IMR-90 (cell line): ENCODE measurements at regions of chr1 and their contacts with region 1.

Region 1: DNA sequence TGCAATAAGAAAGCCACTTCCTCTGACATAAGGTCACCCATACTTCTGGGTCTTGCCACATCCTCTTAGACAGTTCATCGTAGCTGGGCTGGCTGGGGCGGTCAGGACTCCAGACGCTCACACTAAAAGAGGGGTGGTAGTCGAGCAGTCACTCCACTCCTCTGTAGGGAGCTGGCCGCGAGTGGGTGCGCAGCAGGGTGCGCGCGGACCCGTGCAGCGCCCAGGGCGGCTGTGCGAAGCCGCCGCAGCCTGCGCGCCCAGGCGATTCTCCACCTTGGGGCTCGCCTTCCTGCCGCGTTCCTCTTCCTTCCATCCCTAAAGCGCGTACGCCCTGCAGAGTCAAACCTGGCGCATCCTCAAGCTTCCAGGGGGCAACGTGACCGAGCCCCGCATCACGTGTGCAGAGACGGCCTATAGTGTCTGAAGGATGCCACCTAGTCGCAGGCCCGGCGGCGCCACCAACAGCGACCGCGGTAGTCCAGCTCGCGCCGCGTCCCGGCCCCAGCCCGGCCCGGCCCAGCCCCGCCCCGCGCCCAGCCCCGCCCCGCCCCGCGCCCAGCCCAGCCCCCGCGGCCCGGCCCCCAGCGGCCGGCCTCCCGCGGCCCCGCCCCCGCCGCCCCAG is 360 bp upstream of the PRDX6 start:
- DNase-seq: peak; percentile 78
- ATAC-seq: peak; percentile 82
- H3K4me3 ChIP-seq: peak overlapping the region; percentile 95
- H3K27ac ChIP-seq: peak overlapping the region; percentile 79
- H3K4me1 ChIP-seq: peaks cover 16% of the 10 kb centered on the region
- H3K27me3 ChIP-seq: no peaks in the 10 kb centered on the region
- CTCF ChIP-seq: no peak
- POLR2A ChIP-seq: peak; percentile 37; the same call in 1 of the 2 replicates
- RAD21 ChIP-seq: no peak

Region 2: DNA sequence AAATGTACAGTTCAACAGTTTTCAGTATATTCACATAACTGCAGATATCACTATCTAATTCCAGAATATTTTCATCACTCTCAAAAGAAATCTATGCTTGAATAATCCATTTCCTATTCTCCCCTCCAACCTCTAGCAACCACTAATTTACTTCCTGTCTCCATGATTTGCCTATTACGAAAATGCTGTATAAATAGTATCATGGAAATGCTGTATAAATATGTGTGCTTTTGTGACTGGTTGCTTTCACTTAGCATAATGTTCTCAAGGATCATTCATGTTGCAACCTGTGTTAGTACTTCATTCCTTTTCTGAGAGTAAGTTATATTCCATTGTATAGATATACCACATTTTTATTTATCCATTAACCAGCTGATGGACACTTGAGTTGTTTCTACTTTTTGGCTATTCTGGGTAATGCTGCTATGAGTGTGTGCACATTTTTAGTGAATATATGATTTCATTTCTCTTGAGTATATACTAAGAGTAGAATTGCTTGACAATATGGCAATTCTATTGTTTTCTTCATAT is 541.6 kb before region 1 on chr1:
- CTCF ChIA-PET with region 1: no interaction called
- POLR2A ChIA-PET with region 1: no interaction called
- dilution Hi-C with region 1: no loop called
- in situ Hi-C with region 1: no loop called
- intact Hi-C with region 1: loop called (anchors 5 kb)
- DNase-seq: peak; percentile 56
- ATAC-seq: no peak
- H3K4me3 ChIP-seq: no peak overlapping the region
- H3K27ac ChIP-seq: peak overlapping the region; percentile 32; the same call in 1 of the 2 replicates
- H3K4me1 ChIP-seq: peaks cover 25% of the 10 kb centered on the region
- H3K27me3 ChIP-seq: no peaks in the 10 kb centered on the region
- CTCF ChIP-seq: no peak
- POLR2A ChIP-seq: no peak
- RAD21 ChIP-seq: no peak

Region 3: DNA sequence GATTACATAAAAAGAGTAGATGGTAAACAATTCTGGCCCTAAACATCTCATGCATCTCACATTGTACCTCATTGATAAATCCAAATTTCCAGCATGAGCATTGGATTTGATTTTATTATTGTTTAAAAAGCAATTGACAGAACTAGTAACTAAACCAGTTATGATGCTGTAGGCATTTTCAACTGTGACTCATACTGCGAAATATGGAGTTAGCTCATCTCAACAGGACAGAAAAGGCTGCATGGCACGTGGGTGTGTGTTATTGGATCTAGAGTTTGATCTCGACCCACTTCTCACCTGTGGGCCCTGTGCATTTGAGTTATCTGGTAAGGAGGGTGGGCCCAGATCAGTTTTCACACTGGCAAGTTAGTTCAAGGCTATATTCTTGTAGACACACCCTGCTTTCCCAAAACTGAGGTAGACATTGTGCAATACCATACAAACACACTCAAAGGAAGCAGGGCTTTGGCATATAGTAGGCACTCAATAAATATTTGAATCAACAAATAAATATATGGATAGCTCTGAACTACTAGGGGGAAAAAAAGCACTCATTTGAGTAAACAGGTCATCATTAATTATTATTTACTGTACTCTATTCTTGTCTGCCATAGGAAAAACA is 70.9 kb before region 1 on chr1:
- CTCF ChIA-PET with region 1: no interaction called
- POLR2A ChIA-PET with region 1: no interaction called
- dilution Hi-C with region 1: no loop called
- in situ Hi-C with region 1: no loop called
- intact Hi-C with region 1: no loop called
- DNase-seq: peak; percentile 83
- ATAC-seq: peak; percentile 80
- H3K4me3 ChIP-seq: no peak overlapping the region
- H3K27ac ChIP-seq: no peak overlapping the region
- H3K4me1 ChIP-seq: peaks cover 8% of the 10 kb centered on the region
- H3K27me3 ChIP-seq: no peaks in the 10 kb centered on the region
- CTCF ChIP-seq: no peak
- POLR2A ChIP-seq: no peak
- RAD21 ChIP-seq: no peak

Region 4: DNA sequence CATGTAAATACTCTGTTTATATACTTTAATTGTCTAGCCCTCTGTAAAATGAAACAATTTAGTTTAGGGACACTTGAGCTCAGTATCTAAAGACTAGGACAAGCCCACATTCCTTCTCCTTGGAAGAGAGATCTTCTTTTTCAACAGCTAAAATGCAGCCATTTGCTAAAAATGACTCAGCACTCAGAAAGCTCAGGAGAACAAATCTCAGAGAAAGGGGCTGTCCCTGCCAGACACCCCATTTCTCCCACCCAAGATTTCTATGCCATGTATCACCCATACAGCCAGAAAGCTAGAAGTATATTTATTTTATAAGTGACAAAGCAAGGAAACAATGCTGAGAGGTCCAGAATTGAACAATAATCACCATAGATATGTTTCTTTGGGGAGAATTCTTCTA is 22.8 kb before region 1 on chr1:
- CTCF ChIA-PET with region 1: no interaction called
- POLR2A ChIA-PET with region 1: interaction called, 5 read pairs
- dilution Hi-C with region 1: no loop called
- in situ Hi-C with region 1: no loop called
- intact Hi-C with region 1: loop called (anchors 1 kb)
- DNase-seq: peak; percentile 70
- ATAC-seq: peak; percentile 89
- H3K4me3 ChIP-seq: no peak overlapping the region
- H3K27ac ChIP-seq: peak overlapping the region; percentile 38; the same call in 1 of the 2 replicates
- H3K4me1 ChIP-seq: peaks cover 12% of the 10 kb centered on the region
- H3K27me3 ChIP-seq: no peaks in the 10 kb centered on the region
- CTCF ChIP-seq: no peak
- POLR2A ChIP-seq: no peak
- RAD21 ChIP-seq: no peak

Region 5: DNA sequence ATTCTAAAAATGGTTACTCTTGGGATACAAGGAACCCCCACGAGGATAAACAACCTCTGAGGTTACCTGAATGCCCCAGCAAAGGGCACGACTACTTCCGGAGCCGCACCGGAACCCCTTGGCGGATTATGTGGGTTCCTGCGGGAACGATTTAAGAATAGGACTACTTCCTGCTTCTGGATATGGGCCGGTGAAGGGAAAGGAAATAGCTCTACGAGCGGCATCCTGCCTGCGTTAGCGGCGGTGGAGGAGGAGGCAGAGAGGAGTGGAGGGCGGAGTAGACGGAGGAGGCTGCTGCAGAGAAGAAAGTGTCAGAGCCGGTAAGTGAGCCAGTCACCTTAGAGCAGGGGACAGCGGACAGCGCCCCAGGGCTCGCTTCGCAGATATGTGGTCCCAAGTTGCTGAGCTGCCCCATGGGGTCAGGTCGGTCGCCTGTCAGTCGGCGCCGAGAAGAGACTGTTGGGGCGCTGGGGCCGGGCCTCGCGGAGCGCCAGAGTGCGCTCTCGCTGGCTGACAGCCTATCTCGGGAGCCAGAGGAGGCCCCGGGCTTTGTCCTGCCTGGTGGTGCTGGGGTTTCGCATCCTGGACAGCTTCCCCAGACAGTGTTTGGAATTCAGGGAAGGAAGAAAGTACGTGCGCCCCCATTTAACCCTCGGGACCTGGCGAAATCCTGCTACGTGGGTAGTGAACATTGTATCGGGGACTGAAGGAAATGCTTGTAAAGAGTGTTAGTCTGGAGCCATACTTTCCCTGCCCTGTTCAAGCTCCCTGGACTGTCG is 238.2 kb after region 1 on chr1 and contains the start of gene KLHL20:
- CTCF ChIA-PET with region 1: no interaction called
- POLR2A ChIA-PET with region 1: interaction called, 3 read pairs
- dilution Hi-C with region 1: no loop called
- in situ Hi-C with region 1: no loop called
- intact Hi-C with region 1: loop called (anchors 1 kb)
- DNase-seq: peak; percentile 90
- ATAC-seq: peak; percentile 97
- H3K4me3 ChIP-seq: peak within 1 kb of the TSS; percentile 76
- H3K27ac ChIP-seq: peak within 1 kb of the TSS; percentile 85
- H3K4me1 ChIP-seq: no peaks in the 10 kb centered on the region
- H3K27me3 ChIP-seq: peaks cover 4% of the 10 kb centered on the region; the same call in 1 of the 2 replicates
- CTCF ChIP-seq: 0 out of 2 replicates have a peak, but pooled peaks have one; percentile 6
- POLR2A ChIP-seq: peak; percentile 65
- RAD21 ChIP-seq: no peak
- total RNA-seq, gene KLHL20: 23.3 and 25.8 TPM in 2 replicates

Region 6: DNA sequence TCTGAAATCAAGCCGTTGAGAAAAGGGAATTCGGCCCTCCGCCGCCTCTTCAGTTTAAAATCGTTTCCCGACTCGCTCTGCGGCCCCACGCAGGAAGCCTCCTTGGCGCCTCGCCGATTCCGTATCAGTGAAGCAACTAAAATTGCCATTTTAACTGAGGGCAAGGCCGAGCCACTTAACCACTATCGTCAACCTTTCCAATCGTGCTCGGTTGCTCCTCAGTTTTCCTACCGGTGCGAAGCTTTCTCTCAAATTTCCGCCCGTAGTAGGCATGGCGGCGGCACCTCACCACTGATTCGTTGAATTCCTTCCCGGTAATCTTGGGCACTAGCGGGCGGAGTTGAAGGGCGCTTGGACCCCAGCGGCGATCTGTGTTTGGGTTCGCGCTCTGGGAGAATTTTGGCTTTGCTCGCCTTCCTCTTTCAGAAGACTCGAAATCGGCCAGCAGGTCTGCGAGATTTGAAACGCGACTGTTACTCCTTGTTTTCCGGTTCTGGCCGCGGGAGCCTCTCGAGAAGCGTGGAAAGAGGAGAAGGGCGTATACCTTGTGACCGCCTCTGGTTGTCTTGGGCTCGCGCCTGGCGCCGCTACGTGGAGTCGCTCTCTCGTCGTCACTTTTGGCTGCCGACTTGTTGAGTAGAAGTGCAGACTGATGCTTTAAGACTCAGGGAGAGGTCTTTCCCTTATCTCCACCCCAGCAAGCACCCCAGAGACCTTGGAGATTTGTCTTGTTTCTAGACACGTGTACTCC is 347.7 kb after region 1 on chr1 and contains the starts of genes CENPL and DARS2:
- CTCF ChIA-PET with region 1: no interaction called
- POLR2A ChIA-PET with region 1: no interaction called
- dilution Hi-C with region 1: no loop called
- in situ Hi-C with region 1: no loop called
- intact Hi-C with region 1: loop called (anchors 2 kb)
- DNase-seq: peak; percentile 98
- ATAC-seq: peak; percentile 97
- H3K4me3 ChIP-seq: peak within 1 kb of the TSS; percentile 65
- H3K27ac ChIP-seq: peak within 1 kb of the TSS; percentile 84
- H3K4me1 ChIP-seq: peaks cover 2% of the 10 kb centered on the region; the same call in 1 of the 2 replicates
- H3K27me3 ChIP-seq: no peaks in the 10 kb centered on the region
- CTCF ChIP-seq: no peak
- POLR2A ChIP-seq: peak; percentile 86; the same call in 1 of the 2 replicates
- RAD21 ChIP-seq: no peak
- total RNA-seq, gene CENPL: 21.1 and 21.9 TPM in 2 replicates
- total RNA-seq, gene DARS2: 18.8 and 22.8 TPM in 2 replicates